Activated CD4-positive, alpha-beta T cell treated with anti-CD3 and anti-CD28 coated beads, Interleukin-2, amount 10 ng/mL, durations not matched to agents 24 days and 14 days (primary cell): ENCODE measurements at regions of chr5 and their contacts with region 1.

Region 1: GRCh38 chr5:56610093-56610698 is 205.2 kb upstream of the MAP3K1 start:
- DNase-seq: peak; percentile 79
- H3K4me3 Mint-ChIP-seq: peak overlapping the region; percentile 50
- H3K27ac Mint-ChIP-seq: peak overlapping the region; percentile 80
- H3K4me1 Mint-ChIP-seq: peaks cover 79% of the 10 kb centered on the region
- H3K27me3 Mint-ChIP-seq: no peaks in the 10 kb centered on the region

Region 2: GRCh38 chr5:56588636-56589480 is 21.3 kb before region 1 on chr5:
- intact Hi-C with region 1: loop called (anchors 2 kb)
- DNase-seq: peak; percentile 92
- H3K4me3 Mint-ChIP-seq: peak overlapping the region; percentile 16
- H3K27ac Mint-ChIP-seq: peak overlapping the region; percentile 72
- H3K4me1 Mint-ChIP-seq: peaks cover 44% of the 10 kb centered on the region
- H3K27me3 Mint-ChIP-seq: peaks cover 2% of the 10 kb centered on the region

Region 3: GRCh38 chr5:56625541-56625940 is 15.3 kb after region 1 on chr5:
- intact Hi-C with region 1: no loop called
- DNase-seq: no peak
- H3K4me3 Mint-ChIP-seq: no peak overlapping the region
- H3K27ac Mint-ChIP-seq: no peak overlapping the region
- H3K4me1 Mint-ChIP-seq: no peaks in the 10 kb centered on the region
- H3K27me3 Mint-ChIP-seq: peaks cover 9% of the 10 kb centered on the region

Region 4: GRCh38 chr5:56838409-56839039 is 228.3 kb after region 1 on chr5:
- intact Hi-C with region 1: no loop called
- DNase-seq: no peak
- H3K4me3 Mint-ChIP-seq: peak overlapping the region; percentile 52
- H3K27ac Mint-ChIP-seq: peak overlapping the region; percentile 70
- H3K4me1 Mint-ChIP-seq: peaks cover 46% of the 10 kb centered on the region
- H3K27me3 Mint-ChIP-seq: no peaks in the 10 kb centered on the region